A549 (cell line): ENCODE measurements at regions of chr17 and their contacts with region 1.

Region 1: GRCh38 chr17:81733507-81734404 is 21.7 kb downstream of the SLC25A10 start:
- DNase-seq: peak; percentile 82 to 100
- ATAC-seq: peak; percentile 82 to 93
- H3K4me3 ChIP-seq: 0 out of 3 replicates have a peak overlapping the region, but pooled peaks have one; percentile 11
- H3K27ac ChIP-seq: peak overlapping the region in 1 of 2 experiments; percentile 11; a peak in 2 of 6 replicates
- H3K4me1 ChIP-seq: peaks cover 17% of the 10 kb centered on the region
- CTCF ChIP-seq: peak; percentile 97
- EP300 ChIP-seq: no peak
- POLR2A ChIP-seq: no peak
- RAD21 ChIP-seq: peak; percentile 97 to 98

Region 2: DNA sequence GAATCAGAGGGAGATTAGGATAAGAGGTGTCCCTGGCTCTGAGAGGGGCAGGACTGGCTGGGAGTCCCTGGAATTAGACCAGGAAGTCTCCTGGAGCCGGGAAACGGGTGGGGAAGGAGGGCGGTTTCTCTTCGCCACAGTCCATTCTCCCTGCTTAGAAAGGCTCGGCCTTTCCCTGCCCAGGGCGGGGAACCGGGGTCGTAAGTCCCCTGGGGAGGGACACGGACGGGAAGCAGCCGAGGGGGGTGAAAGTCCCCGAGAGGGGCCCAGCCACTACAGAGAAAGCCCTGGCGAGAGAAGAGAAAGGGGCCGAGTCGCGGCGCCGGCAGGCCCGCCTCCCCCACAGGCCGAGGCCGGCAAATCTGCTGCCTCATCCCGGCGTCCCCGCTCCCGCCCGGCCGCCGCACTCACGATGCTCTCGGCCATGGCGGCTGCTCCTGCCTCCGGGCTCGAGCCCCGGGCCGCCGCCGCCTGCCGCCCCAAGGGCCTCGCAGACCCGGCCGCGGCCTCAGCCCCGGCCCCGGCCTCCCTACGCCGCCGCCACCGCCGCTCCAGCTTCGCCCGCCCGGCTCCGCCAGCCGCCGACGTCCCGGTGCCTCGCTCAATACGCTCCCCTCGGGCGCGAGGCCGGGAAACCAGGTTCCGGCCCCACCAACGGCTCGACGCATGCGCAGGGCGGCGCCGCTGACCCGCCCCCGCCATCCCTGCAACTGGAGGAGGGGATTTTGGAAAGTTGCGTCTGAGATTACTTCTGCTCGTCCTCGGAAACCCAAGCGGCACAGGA is 97.1 kb before region 1 on chr17 and contains the starts of genes NPLOC4 and TSPAN10:
- CTCF ChIA-PET with region 1: no interaction called
- POLR2A ChIA-PET with region 1: no interaction called
- DNase-seq: peak; percentile 91 to 98
- ATAC-seq: peak; percentile 82 to 88
- H3K4me3 ChIP-seq: peak within 1 kb of the TSS; percentile 79
- H3K27ac ChIP-seq: peak within 1 kb of the TSS; percentile 97
- H3K4me1 ChIP-seq: peaks cover 20% of the 10 kb centered on the region
- CTCF ChIP-seq: no peak
- EP300 ChIP-seq: no peak; a peak in 1 of 5 replicates
- POLR2A ChIP-seq: peak; percentile 88
- RAD21 ChIP-seq: no peak; a peak in 2 of 5 replicates
- polyA plus RNA-seq, gene NPLOC4: 101 and 130 TPM in 2 replicates
- polyA plus RNA-seq, gene TSPAN10: 1.4 and 1.7 TPM in 2 replicates

Region 3: DNA sequence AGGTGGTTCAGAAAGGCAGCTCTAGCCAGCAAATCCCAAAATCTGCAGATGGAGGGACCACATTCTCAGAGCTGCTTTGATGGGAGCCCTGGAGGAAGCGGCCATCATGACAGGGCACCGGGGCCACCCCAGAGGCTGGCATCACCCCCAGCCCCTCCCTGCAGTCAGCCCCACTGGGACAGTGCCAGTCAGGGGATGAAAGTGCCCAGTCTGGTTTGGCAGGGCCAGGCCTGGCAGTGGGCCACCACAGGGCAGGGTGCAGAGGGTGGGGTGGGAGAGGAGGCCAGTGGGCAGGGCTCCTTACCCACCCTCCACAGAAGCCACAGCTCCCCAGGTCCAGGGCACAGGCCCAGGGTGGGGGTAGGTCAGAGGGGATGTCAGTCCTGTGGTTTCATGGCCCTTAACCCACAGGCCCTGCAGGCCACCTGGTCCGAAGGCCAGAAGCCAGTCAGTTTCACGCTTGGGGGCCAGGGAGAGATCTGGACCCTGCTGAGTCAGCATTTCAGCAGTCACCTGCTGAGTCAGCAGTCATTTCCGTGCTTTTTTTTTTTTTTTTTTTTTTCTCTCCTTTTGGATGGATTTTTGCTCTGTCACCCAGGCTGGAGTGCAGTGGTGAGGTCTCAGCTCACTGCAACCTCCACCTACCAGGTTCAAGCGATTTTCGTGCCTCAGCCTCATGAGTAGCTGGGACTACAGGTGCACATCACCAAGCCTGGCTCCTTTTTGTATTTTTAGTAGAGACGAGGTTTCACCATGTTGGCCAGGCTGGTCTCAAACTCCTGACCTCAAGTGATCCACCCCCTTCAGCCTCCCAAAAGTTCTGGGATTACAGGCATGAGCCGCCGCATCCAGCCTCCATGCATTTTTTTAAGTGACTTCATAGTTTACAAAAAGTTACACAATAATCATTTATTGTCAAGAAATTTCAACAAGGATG is 11.3 kb before region 1 on chr17:
- CTCF ChIA-PET with region 1: interaction called, 55 read pairs
- POLR2A ChIA-PET with region 1: no interaction called
- DNase-seq: no peak
- ATAC-seq: peak; percentile 29 to 40; a peak in 5 of 6 replicates
- H3K4me3 ChIP-seq: no peak overlapping the region
- H3K27ac ChIP-seq: peak overlapping the region in 1 of 2 experiments; percentile 72; a peak in 3 of 6 replicates
- H3K4me1 ChIP-seq: peaks cover 19% of the 10 kb centered on the region
- CTCF ChIP-seq: no peak
- EP300 ChIP-seq: no peak
- POLR2A ChIP-seq: no peak; the same call in 1 of the 2 replicates
- RAD21 ChIP-seq: no peak

Region 4: DNA sequence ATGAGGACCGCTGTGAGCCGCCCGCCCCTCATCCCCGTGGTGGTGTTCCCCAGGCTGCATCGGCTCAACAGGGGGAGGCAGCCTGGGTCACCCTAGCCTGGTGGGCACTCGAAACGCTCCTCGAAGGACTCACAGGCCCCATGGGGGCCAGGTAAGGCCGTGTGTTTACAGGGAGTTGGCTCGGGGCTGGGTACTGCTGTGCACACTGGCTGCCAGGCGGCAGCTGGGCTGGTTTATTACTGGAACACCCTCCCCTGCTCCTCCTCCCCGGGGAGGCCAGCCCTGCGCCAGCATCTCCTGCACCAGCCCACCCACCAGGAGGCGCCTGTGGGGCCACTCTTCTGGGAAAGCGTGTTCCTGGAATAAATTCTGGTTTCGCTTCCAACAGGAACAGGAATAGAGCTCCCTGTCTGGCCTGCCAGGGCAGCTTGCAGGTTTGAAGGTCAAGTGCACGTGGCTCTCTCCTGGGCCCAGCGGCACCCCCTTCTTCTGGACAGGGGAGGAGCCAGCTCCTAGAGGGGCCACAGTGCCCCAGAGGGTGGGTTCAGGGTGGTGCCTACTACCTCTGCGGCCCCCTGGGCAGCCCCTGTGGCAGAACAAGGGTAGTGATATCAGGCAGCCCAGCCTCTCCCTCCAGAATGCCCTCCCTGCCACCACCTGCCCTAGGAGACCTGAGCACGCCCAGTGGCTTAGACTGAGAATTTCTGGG is 88.0 kb after region 1 on chr17:
- CTCF ChIA-PET with region 1: interaction called, 22 read pairs
- POLR2A ChIA-PET with region 1: no interaction called
- DNase-seq: peak; percentile 85 to 93
- ATAC-seq: peak; percentile 61 to 90
- H3K4me3 ChIP-seq: no peak overlapping the region
- H3K27ac ChIP-seq: peak overlapping the region; percentile 54 to 81
- H3K4me1 ChIP-seq: peaks cover 24% of the 10 kb centered on the region
- CTCF ChIP-seq: peak; percentile 63
- EP300 ChIP-seq: no peak
- POLR2A ChIP-seq: no peak
- RAD21 ChIP-seq: peak; percentile 31 to 59; a peak in 2 of 5 replicates

Region 5: GRCh38 chr17:81854974-81855774 is 121.4 kb after region 1 on chr17:
- CTCF ChIA-PET with region 1: interaction called, 96 read pairs
- POLR2A ChIA-PET with region 1: no interaction called
- DNase-seq: no peak
- ATAC-seq: peak; percentile 32 to 50; a peak in 4 of 6 replicates
- H3K4me3 ChIP-seq: no peak overlapping the region
- H3K27ac ChIP-seq: no peak overlapping the region
- H3K4me1 ChIP-seq: peaks cover 12% of the 10 kb centered on the region; the same call in 2 of the 3 replicates
- CTCF ChIP-seq: no peak
- EP300 ChIP-seq: no peak
- POLR2A ChIP-seq: no peak
- RAD21 ChIP-seq: peak in 1 of 2 experiments; percentile 47; a peak in 3 of 5 replicates